ENCODE measurements at regions of chr4 and their contacts with region 1.

Region 1: DNA sequence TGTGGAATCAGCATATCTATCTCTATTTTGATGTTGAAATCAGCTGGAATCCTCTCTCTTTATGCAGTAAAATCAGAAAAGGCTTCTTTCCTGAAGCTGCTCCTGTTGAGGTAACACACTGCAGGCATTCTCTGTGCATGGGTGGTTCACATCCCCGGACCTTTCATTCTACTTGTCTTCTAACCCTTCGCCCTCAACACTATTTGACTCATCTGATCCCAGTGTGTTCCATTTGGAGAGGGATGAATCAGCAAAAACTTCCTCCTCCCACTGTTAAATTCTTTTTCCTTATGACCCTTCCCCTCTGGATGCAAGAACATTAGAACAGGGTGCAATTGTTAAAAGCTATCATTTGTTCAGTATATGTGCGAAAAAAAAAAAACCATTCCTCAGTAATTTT is 67.4 kb downstream of the RNF150 start:
- DNase-seq: no peak
- H3K4me3 ChIP-seq: no peak overlapping the region
- H3K27ac ChIP-seq: no peak overlapping the region
- H3K4me1 ChIP-seq: peaks cover 0 to 7% (median 3%) of the 10 kb centered on the region in 4 donors
- H3K27me3 ChIP-seq: no peaks in the 10 kb centered on the region
- CTCF ChIP-seq: no peak
- EP300 ChIP-seq: no peak
- POLR2A ChIP-seq: no peak

Region 2: DNA sequence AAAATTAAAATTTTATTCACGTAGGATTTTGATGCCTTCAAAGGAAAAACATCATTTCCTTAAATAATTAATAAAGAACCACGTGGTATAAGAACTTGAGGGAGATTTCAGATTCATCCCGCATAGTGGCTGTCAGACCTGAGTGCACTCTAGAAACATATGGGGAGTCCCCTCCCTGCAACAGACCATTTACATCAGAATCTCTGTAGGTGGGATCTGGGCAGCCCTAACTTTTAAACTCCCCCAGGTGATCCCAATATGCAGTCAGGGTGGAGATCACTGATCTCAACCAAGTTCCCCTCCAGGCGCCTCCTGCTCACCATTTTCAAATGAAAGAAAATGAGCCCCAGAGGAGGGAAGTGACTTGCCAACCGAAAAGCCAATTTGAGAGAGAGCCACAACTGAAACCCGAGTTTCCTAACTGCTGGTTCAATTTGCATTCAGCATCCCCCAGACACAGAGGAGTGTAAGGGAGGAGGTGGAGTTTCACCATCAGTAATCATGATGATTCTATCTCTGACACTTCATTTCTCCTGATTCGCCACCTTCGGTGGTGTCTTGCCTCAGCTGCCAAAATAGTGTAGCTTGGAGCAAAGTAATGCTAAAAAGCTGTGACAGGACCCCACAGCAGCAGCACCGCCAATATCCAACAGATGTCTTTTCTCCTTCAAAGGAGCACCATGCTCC is 56.0 kb after region 1 on chr4:
- intact Hi-C with region 1: loop called (anchors 10 kb)
- DNase-seq: no peak
- H3K4me3 ChIP-seq: no peak overlapping the region
- H3K27ac ChIP-seq: no peak overlapping the region
- H3K4me1 ChIP-seq: peaks cover 25 to 51% (median 47%) of the 10 kb centered on the region in 4 donors
- H3K27me3 ChIP-seq: no peaks in the 10 kb centered on the region
- CTCF ChIP-seq: no peak
- EP300 ChIP-seq: no peak
- POLR2A ChIP-seq: no peak

Measured in esophagus muscularis mucosa (tissue), 4 donors.